ENCODE measurements at regions of chrX and their contacts with region 1.

Region 1: GRCh38 chrX:115284877-115285276 is 4.6 kb upstream of the LUZP4 start:
- H3K4me3 ChIP-seq: no peak overlapping the region
- H3K27ac ChIP-seq: no peak overlapping the region
- H3K4me1 ChIP-seq: no peaks in the 10 kb centered on the region
- CTCF ChIP-seq: no peak

Region 2: DNA sequence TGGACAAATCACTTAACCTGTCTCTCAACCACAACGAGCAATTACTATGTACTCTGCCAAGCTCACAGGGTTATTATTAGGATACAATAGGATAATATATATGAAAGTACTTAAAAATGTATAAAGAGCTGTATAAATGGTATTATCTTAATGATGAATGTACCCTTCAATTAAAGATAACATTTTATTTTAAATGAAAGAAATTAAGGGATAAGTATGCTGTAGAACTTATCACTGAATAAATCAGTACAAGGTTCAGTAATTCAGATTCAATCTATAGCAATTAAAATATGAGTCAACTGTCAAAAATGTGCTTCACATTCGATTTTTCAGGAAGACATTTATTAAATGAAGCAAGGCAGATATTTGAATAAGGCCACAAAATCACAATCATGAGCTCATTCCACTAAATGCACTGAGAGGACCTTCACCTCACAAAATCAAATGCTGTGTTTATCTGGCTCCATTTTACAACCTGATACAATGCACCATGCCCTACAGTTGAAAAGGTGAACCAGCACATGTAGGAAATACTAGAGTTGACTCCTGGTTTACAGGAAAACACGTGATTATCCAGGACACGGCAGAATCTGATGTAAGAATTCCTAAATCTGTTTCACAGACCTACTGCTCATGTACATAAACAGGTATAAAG is 55.4 kb before region 1 on chrX:
- CTCF ChIA-PET with region 1: interaction called, 11 read pairs
- POLR2A ChIA-PET with region 1: no interaction called
- H3K4me3 ChIP-seq: no peak overlapping the region
- H3K27ac ChIP-seq: no peak overlapping the region
- H3K4me1 ChIP-seq: peaks cover 28% of the 10 kb centered on the region; the same call in 1 of the 2 replicates
- CTCF ChIP-seq: no peak

Region 3: DNA sequence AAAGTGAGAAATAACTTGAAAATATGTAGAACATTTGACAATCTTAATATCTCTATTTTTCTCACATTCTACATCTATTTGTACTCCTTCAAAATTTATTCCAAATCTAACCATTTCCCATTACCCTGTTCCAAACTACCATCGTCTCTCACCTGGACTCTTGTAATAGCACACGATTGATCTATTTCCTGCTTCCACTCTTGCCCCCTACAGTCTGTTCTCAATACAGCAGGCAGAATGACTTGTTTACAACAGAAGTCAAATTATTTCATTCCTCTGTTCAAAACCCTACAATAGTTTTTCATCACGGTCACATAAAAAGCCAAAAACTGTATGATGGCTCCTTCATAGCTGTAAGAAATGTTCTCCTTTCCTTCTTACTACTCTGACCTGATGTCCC is 16.5 kb before region 1 on chrX:
- CTCF ChIA-PET with region 1: interaction called, 12 read pairs
- POLR2A ChIA-PET with region 1: no interaction called
- H3K4me3 ChIP-seq: no peak overlapping the region
- H3K27ac ChIP-seq: no peak overlapping the region
- H3K4me1 ChIP-seq: no peaks in the 10 kb centered on the region
- CTCF ChIP-seq: no peak

Measured in HEK293 (cell line).